Ascending aorta (tissue), 2 donors: ENCODE measurements at regions of chr4 and their contacts with region 1.

Region 1: DNA sequence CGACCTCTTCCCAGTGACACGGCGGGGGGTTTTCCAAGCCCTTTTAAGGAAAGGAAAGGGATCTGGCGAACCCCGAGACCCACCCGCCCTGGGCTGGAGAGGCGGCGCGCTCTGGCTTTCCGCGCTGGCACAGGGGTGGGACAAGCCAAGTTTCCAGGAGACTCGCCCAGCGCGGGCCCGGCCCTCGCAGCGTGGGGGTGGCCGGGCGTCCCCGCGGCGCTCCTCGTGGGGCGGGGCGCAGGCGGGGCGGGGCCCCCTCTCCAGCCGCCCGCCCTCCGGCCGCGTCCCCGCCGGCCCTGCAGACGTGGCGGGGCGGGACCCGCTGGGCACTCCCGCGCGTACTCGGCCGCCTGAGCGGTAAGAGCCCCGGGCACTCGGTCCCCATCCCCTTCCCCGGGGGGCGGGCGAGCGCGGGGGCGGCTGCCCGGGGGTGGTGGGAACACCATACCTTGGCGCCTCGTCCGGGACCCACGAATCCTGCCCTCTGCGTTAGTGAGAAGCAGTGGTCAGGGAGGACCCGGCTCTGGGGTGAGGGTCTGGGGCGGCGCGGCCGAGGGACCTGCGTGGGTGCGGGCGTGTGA is at the start of gene FAM114A1:
- DNase-seq: peak in 1 of 2 donors; percentile 89
- H3K4me3 ChIP-seq: peak within 1 kb of the TSS; percentile 74 to 83
- H3K27ac ChIP-seq: peak within 1 kb of the TSS; percentile 94 to 96
- H3K4me1 ChIP-seq: peaks cover 0 to 13% of the 10 kb centered on the region in 2 donors
- H3K27me3 ChIP-seq: no peaks in the 10 kb centered on the region
- CTCF ChIP-seq: no peak
- total RNA-seq, gene FAM114A1: 45.7 TPM

Region 2: GRCh38 chr4:38889143-38889542 is 21.6 kb after region 1 on chr4:
- intact Hi-C with region 1: loop called (anchors 1 kb)
- DNase-seq: no peak
- H3K4me3 ChIP-seq: no peak overlapping the region
- H3K27ac ChIP-seq: peak overlapping the region; percentile 55 to 66
- H3K4me1 ChIP-seq: peaks cover 0 to 16% of the 10 kb centered on the region in 2 donors
- H3K27me3 ChIP-seq: no peaks in the 10 kb centered on the region
- CTCF ChIP-seq: no peak